ENCODE measurements at regions of chr1 and their contacts with region 1.

Region 1: GRCh38 chr1:169794530-169795416 is at the start of gene METTL18:
- DNase-seq: peak; percentile 62 to 93
- H3K4me3 ChIP-seq: peak within 1 kb of the TSS; percentile 55 to 78
- H3K27ac ChIP-seq: peak within 1 kb of the TSS; percentile 74 to 81
- H3K4me1 ChIP-seq: peaks cover 3 to 4% of the 10 kb centered on the region in 2 donors
- H3K27me3 ChIP-seq: no peaks in the 10 kb centered on the region
- CTCF ChIP-seq: no peak
- total RNA-seq, gene METTL18: 19.2 TPM

Region 2: GRCh38 chr1:169367486-169368405 is 427.0 kb before region 1 on chr1 and contains the starts of genes BLZF1 and NME7:
- intact Hi-C with region 1: loop called (anchors 10 kb)
- DNase-seq: peak; percentile 95 to 98
- H3K4me3 ChIP-seq: peak within 1 kb of the TSS; percentile 84 to 90
- H3K27ac ChIP-seq: peak within 1 kb of the TSS; percentile 64 to 80
- H3K4me1 ChIP-seq: peaks cover 0 to 6% of the 10 kb centered on the region in 2 donors
- H3K27me3 ChIP-seq: no peaks in the 10 kb centered on the region
- CTCF ChIP-seq: no peak
- total RNA-seq, gene BLZF1: 8.5 TPM
- total RNA-seq, gene NME7: 4.9 TPM

Region 3: GRCh38 chr1:169893494-169894362 is 99.0 kb after region 1 on chr1 and contains the start of gene SCYL3:
- intact Hi-C with region 1: loop called (anchors 1 kb)
- DNase-seq: peak; percentile 91 to 97
- H3K4me3 ChIP-seq: peak within 1 kb of the TSS; percentile 90 to 97
- H3K27ac ChIP-seq: peak within 1 kb of the TSS; percentile 84 to 98
- H3K4me1 ChIP-seq: peaks cover 6 to 18% of the 10 kb centered on the region in 2 donors
- H3K27me3 ChIP-seq: no peaks in the 10 kb centered on the region
- CTCF ChIP-seq: no peak
- total RNA-seq, gene SCYL3: 0.96 TPM

Measured in ascending aorta (tissue), 2 donors.